Activated naive CD4-positive, alpha-beta T cell treated with anti-CD3 and anti-CD28 coated beads for 36 hours (primary cell): ENCODE measurements at regions of chr5 and their contacts with region 1.

Region 1: DNA sequence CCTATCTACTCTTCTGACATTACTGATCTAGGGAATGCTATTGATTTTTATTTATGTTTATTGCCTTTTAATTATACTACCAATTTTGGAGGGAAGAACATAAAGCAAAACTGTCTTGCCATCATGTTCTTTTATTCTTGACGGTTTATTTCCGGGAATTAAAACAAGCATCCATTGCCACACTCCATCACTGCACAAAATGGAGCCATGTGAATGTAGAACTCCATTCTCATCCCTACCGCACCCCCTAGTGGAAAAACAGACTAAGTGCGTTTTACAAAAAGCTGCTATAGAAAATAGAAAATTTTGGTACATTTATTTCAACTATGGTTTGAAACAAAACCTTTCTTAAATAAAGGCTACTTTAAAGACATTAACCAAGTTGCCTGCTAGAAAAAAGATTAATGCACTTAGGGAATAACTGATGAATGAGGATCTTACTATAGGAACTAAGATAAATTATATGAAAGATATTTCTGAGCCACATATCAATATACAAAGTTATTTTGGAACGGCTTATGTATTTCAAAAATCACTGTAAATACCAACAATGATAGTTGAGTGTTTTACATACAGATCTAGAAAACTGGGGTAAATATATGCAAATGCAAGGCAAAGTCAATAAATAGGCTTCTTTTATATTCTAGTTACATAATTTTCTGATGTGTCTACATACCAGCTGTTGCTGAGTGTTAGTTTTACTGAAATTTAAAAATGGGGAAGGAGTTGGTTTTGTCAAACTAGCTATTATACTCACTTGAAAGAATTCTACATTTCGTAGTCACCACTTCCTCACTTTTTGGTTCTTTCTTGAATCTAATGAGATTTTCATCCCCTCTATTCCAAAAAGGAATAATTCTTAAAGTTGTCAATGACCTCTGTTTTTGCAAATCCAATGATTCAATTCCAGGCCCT is 26.5 kb downstream of the OXCT1 start:
- DNase-seq: peak; percentile 36
- H3K4me3 Mint-ChIP-seq: no peak overlapping the region
- H3K27ac Mint-ChIP-seq: no peak overlapping the region
- H3K4me1 Mint-ChIP-seq: peaks cover 13% of the 10 kb centered on the region
- H3K27me3 Mint-ChIP-seq: no peaks in the 10 kb centered on the region

Region 2: DNA sequence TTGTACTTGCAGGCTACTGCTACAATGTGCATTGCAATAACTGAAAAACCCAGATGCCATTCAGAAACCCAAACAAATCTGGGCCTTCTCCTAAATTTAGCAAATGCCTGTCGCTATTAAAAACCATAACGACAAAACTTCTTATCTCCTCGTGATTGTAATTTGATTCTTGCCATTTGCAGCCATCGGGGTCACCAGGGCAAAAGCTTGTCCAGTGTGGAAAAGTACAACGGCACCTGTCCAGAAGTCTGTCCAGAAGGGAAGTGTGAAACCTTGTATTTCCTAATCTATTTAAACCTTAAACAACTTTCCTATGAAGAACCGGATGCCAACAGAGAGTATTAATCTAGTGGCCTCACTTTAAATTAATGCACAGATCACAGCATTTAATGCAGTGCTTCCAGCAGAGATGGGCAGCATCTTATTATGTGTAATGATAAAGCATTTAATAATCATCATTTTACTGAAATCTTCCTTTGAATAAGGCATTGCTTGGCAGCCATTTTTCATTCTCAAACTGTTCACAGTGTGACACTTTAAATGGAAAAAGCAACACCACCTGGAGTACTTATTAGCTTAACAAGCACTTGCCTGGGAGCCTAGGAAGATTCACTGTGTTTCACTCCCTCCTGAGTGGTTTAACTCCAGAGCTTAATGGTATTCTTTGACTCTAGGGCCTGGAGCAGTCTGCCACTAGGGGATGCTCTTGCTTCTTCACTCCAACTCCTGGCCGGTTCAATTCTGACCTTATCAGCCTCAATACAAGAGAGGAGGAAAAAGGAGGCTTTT is 939.3 kb before region 1 on chr5:
- CTCF ChIA-PET with region 1: no interaction called
- intact Hi-C with region 1: loop called (anchors 1 kb)
- DNase-seq: peak; percentile 62
- H3K4me3 Mint-ChIP-seq: no peak overlapping the region
- H3K27ac Mint-ChIP-seq: no peak overlapping the region
- H3K4me1 Mint-ChIP-seq: no peaks in the 10 kb centered on the region
- H3K27me3 Mint-ChIP-seq: no peaks in the 10 kb centered on the region

Region 3: GRCh38 chr5:41270423-41271251 is 573.1 kb before region 1 on chr5:
- CTCF ChIA-PET with region 1: no interaction called
- intact Hi-C with region 1: loop called (anchors 1 kb)
- DNase-seq: peak; percentile 12
- H3K4me3 Mint-ChIP-seq: no peak overlapping the region
- H3K27ac Mint-ChIP-seq: no peak overlapping the region
- H3K4me1 Mint-ChIP-seq: no peaks in the 10 kb centered on the region
- H3K27me3 Mint-ChIP-seq: no peaks in the 10 kb centered on the region

Region 4: GRCh38 chr5:41695920-41696582 is 147.7 kb before region 1 on chr5:
- CTCF ChIA-PET with region 1: interaction called, 10 read pairs
- intact Hi-C with region 1: loop called (anchors 1 kb)
- DNase-seq: no peak
- H3K4me3 Mint-ChIP-seq: no peak overlapping the region
- H3K27ac Mint-ChIP-seq: no peak overlapping the region
- H3K4me1 Mint-ChIP-seq: no peaks in the 10 kb centered on the region
- H3K27me3 Mint-ChIP-seq: peaks cover 24% of the 10 kb centered on the region

Region 5: DNA sequence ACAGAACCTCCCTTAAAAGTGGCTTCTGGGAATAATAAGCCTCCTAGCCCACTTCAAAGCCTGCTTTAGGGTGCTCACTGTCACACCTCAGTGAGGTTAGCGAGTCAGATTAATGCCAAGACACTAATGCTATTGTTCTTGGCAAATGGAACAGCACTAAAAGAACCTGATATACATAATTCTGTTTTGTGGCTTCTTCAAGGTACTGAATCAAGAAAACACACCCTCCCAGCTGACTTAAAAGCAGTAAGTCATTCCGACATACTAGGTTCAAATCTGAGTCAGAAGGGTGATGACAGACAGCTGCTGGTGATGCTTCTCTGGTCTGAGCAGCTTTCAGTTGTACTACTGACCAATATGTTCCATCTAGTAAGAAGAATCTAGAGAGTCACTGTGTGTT is 95.1 kb before region 1 on chr5:
- CTCF ChIA-PET with region 1: no interaction called
- intact Hi-C with region 1: loop called (anchors 5 kb)
- DNase-seq: peak; percentile 63
- H3K4me3 Mint-ChIP-seq: no peak overlapping the region
- H3K27ac Mint-ChIP-seq: no peak overlapping the region
- H3K4me1 Mint-ChIP-seq: peaks cover 34% of the 10 kb centered on the region
- H3K27me3 Mint-ChIP-seq: no peaks in the 10 kb centered on the region

Region 6: DNA sequence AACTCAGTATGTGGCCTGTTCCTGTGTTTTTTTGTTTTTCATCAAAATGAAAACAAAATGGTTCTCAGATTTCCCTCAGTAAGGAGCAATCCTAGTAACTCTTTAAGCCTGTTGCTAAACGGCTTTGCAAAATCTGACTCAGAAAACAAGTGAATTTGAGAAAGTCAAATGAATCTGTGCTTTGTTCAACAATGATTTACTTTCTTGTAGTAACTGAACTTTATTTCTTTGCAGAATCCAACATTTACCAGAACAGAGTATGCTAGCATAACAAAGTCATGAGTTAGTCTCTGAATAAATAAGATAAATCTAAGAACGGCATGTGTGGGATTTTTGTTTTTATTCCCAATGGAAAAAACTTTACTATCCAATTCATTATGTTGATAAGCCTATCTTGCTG is 67.3 kb before region 1 on chr5:
- CTCF ChIA-PET with region 1: no interaction called
- intact Hi-C with region 1: no loop called
- DNase-seq: no peak
- H3K4me3 Mint-ChIP-seq: no peak overlapping the region
- H3K27ac Mint-ChIP-seq: no peak overlapping the region
- H3K4me1 Mint-ChIP-seq: no peaks in the 10 kb centered on the region
- H3K27me3 Mint-ChIP-seq: no peaks in the 10 kb centered on the region